ENCODE measurements at regions of chr4 and their contacts with region 1.

Region 1: DNA sequence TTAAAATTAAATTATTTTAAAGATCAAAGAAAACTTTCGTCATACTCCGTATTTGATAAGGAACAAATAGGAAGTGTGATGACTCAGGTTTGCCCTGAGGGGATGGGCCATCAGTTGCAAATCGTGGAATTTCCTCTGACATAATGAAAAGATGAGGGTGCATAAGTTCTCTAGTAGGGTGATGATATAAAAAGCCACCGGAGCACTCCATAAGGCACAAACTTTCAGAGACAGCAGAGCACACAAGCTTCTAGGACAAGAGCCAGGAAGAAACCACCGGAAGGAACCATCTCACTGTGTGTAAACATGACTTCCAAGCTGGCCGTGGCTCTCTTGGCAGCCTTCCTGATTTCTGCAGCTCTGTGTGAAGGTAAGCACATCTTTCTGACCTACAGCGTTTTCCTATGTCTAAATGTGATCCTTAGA is at the start of gene CXCL8:
- DNase-seq: peak; percentile 37 to 90
- ATAC-seq: peak; percentile 97
- H3K4me3 ChIP-seq: peak within 1 kb of the TSS; percentile 47
- H3K27ac ChIP-seq: peak within 1 kb of the TSS; percentile 68 to 78
- H3K4me1 ChIP-seq: peaks cover 27% of the 10 kb centered on the region
- CTCF ChIP-seq: no peak
- EP300 ChIP-seq: peak; percentile 61 to 75; a peak in 2 of 5 replicates
- POLR2A ChIP-seq: no peak
- RAD21 ChIP-seq: peak in 1 of 2 experiments; percentile 44; a peak in 3 of 5 replicates
- polyA plus RNA-seq, gene CXCL8: 57.2 and 87.7 TPM in 2 replicates

Region 2: GRCh38 chr4:73704314-73705055 is 35.9 kb before region 1 on chr4:
- CTCF ChIA-PET with region 1: interaction called, 3 read pairs
- POLR2A ChIA-PET with region 1: interaction called, 11 read pairs
- DNase-seq: peak; percentile 43 to 91
- ATAC-seq: peak; percentile 86 to 91
- H3K4me3 ChIP-seq: no peak overlapping the region
- H3K27ac ChIP-seq: peak overlapping the region; percentile 87 to 91
- H3K4me1 ChIP-seq: peaks cover 64% of the 10 kb centered on the region
- CTCF ChIP-seq: no peak
- EP300 ChIP-seq: peak; percentile 61 to 88; a peak in 3 of 5 replicates
- POLR2A ChIP-seq: no peak
- RAD21 ChIP-seq: peak in 1 of 2 experiments; percentile 42; a peak in 2 of 5 replicates

Region 3: GRCh38 chr4:73729534-73730165 is 10.7 kb before region 1 on chr4:
- CTCF ChIA-PET with region 1: interaction called, 20 read pairs
- POLR2A ChIA-PET with region 1: interaction called, 5 read pairs
- DNase-seq: peak; percentile 43 to 71
- ATAC-seq: peak; percentile 87 to 91
- H3K4me3 ChIP-seq: no peak overlapping the region
- H3K27ac ChIP-seq: peak overlapping the region; percentile 57 to 82
- H3K4me1 ChIP-seq: peaks cover 41% of the 10 kb centered on the region
- CTCF ChIP-seq: peak; percentile 59
- EP300 ChIP-seq: no peak
- POLR2A ChIP-seq: no peak
- RAD21 ChIP-seq: peak; percentile 61 to 69

Measured in A549 (cell line).